ENCODE measurements at regions of chr4 and their contacts with region 1.

Region 1: GRCh38 chr4:56977321-56978012 is at the start of gene NOA1:
- DNase-seq: peak; percentile 98
- ATAC-seq: peak; percentile 84
- H3K4me3 Mint-ChIP-seq: peak within 1 kb of the TSS; percentile 96
- H3K27ac Mint-ChIP-seq: peak within 1 kb of the TSS; percentile 99
- H3K4me1 Mint-ChIP-seq: peaks cover 45% of the 10 kb centered on the region
- H3K27me3 Mint-ChIP-seq: no peaks in the 10 kb centered on the region
- CTCF ChIP-seq: no peak
- total RNA-seq, gene NOA1: 32.1 to 32.4 TPM

Region 2: DNA sequence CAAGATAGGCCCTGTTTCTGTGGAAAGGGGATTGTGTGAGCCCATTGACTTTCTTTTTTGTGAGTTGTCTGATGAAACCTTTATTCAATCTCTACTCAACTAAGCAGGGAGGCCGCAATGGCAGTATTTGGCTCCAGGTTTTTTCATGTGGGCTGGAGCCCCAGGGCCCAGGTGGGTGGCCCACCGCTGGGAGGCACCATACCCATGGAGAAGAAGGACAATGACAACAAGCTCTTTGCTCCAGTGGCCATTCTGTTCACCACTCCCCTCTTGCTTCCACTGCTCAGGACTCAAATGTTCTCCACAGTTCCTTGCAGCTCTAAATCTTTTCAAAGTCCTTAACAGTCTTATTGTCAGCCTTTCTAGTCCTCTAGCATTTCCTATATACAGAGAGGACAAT is 350.5 kb before region 1 on chr4:
- CTCF ChIA-PET with region 1: no interaction called
- POLR2A ChIA-PET with region 1: no interaction called
- intact Hi-C with region 1: no loop called
- DNase-seq: no peak
- ATAC-seq: no peak
- H3K4me3 Mint-ChIP-seq: no peak overlapping the region
- H3K27ac Mint-ChIP-seq: no peak overlapping the region
- H3K4me1 Mint-ChIP-seq: peaks cover 2% of the 10 kb centered on the region
- H3K27me3 Mint-ChIP-seq: peaks cover under 1% of the 10 kb centered on the region
- CTCF ChIP-seq: no peak

Region 3: GRCh38 chr4:56907489-56908205 is 69.8 kb before region 1 on chr4 and contains the start of gene REST:
- CTCF ChIA-PET with region 1: interaction called, 7 read pairs
- POLR2A ChIA-PET with region 1: interaction called, 76 read pairs
- intact Hi-C with region 1: loop called (anchors 5 kb)
- DNase-seq: peak; percentile 77
- ATAC-seq: peak; percentile 62
- H3K4me3 Mint-ChIP-seq: peak within 1 kb of the TSS; percentile 84
- H3K27ac Mint-ChIP-seq: peak within 1 kb of the TSS; percentile 72
- H3K4me1 Mint-ChIP-seq: peaks cover 35% of the 10 kb centered on the region
- H3K27me3 Mint-ChIP-seq: peaks cover 1% of the 10 kb centered on the region
- CTCF ChIP-seq: no peak
- total RNA-seq, gene REST: 41.0 to 41.2 TPM

Region 4: DNA sequence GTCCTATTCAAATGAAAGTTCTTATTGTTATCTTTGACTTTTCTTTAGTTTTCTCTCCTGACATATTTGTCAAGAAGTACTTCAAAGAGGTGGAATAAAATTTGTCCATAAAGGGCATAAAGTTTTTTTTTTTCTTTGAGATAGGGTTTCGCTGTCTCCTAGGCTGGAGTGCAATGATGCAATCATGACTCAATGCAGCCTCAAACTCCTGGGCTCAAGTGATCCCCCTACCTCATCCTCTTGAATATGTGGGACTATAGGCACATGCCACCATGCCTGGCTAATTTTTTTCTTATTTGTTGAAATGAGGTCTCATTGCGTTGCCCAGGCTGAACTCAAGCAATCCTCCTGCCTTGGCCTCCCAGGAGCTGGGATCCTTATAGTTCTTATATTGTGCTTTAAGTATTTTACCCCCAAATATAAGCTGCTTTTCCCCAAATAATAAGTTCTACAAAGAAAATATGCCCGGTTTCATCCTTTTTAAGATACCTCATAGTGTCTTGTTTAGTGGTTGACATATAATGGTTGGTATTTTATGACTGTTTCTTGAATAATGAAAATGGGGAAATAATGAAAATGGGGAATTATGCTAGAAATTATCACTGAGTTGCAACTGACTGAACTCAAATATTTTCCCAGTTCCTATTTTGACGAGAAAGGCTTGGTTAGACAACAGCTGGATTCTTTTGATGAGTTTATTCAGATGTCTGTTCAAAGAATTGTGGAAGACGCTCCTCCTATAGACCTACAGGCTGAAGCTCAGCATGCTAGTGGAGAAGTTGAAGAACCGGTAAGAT is 12.8 kb after region 1 on chr4:
- CTCF ChIA-PET with region 1: interaction called, 4 read pairs
- POLR2A ChIA-PET with region 1: interaction called, 64 read pairs
- intact Hi-C with region 1: no loop called
- DNase-seq: no peak
- ATAC-seq: no peak
- H3K4me3 Mint-ChIP-seq: no peak overlapping the region
- H3K27ac Mint-ChIP-seq: peak overlapping the region; percentile 70
- H3K4me1 Mint-ChIP-seq: peaks cover 39% of the 10 kb centered on the region
- H3K27me3 Mint-ChIP-seq: no peaks in the 10 kb centered on the region
- CTCF ChIP-seq: no peak

Region 5: DNA sequence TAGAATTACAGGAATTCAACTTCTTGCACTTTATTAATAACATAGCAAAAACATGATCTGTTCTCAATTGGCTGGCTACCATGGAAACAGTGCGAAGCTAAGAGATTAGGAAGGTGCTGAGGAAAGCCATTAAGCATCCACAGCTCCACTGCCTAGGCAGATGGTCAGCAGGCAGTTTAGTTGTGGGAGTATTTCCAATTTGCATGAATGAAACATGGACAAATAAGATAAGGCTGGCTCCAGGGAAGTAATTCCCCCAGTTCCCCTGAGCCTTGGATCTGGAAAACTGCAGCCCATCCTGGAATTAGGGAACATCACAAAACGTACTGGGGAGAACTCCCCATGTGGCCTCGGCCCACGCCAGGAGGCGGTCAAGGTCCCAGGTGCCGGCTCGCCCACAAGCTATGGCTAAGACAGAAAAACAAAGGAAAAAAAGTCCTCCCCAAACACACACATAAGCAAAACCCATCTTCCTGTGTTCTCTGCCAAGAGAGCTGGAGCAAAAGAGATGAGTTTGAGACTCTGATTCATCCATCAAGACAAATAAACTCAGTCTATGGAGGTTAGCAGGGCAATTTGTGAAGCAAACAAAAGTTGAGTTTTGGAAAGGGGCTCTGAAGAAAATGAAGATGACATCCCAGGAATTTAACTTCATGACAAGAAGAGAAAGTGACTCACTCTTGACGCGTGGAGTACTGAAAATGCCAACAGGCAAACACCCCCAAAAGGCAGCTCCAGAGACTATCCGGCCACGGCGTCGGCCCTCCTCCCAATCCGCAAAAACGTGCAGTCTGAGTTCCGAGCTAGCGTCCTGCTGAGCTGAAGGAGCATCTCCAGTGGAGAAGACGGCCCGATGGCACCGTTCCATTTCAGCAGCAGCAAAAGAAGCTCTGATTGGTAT is 87.6 kb after region 1 on chr4:
- CTCF ChIA-PET with region 1: no interaction called
- POLR2A ChIA-PET with region 1: no interaction called
- intact Hi-C with region 1: no loop called
- DNase-seq: no peak
- ATAC-seq: no peak
- H3K4me3 Mint-ChIP-seq: no peak overlapping the region
- H3K27ac Mint-ChIP-seq: no peak overlapping the region
- H3K4me1 Mint-ChIP-seq: no peaks in the 10 kb centered on the region
- H3K27me3 Mint-ChIP-seq: no peaks in the 10 kb centered on the region
- CTCF ChIP-seq: no peak

Measured in activated CD8-positive, alpha-beta T cell treated with anti-CD3 and anti-CD28 coated beads for 36 hours (primary cell).